Gastrocnemius medialis (tissue), 4 donors: ENCODE measurements at regions of chr4 and their contacts with region 1.

Region 1: DNA sequence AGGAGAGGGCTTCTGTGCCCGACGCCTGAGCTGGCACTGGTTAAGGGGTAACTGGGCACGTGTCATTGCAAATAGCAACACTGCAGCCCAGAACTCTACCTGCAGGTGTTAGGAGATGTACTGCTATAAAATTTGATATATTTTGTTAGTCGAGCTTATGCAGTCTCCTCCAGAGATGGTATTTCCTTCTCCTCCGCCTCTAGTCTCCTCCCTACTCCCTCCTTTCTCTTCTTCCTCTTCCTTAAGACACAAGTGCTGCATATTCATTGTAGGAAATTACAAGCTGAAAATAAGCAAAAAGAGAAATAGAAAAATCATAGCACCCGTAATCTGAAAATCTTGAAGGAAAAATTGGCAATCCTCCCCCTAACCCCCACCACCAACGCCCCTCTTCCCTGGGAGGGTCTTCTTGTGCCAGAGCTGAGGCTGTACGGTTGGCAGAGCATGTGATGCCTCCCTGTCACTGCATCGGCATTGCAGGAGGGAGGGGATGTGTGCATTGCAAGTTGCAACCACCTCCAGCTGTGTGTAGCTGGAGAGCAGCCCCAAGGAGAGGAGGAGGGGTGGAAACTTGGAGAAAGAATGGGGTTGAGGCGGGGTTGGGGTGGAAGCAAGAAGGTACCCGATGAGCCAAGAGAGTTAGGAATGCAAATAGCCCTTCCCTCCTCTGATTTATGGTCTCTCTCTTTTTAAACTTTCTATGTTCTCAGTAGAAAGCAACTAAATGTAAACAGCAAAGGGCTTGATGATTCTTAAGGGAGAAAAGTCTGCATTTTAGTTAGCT is 48.3 kb upstream of the MND1 start:
- DNase-seq: no peak
- ATAC-seq: no peak
- H3K4me3 ChIP-seq: no peak overlapping the region
- H3K27ac ChIP-seq: no peak overlapping the region
- H3K4me1 ChIP-seq: no peaks in the 10 kb centered on the region
- H3K27me3 ChIP-seq: no peaks in the 10 kb centered on the region
- CTCF ChIP-seq: no peak
- POLR2A ChIP-seq: no peak

Region 2: DNA sequence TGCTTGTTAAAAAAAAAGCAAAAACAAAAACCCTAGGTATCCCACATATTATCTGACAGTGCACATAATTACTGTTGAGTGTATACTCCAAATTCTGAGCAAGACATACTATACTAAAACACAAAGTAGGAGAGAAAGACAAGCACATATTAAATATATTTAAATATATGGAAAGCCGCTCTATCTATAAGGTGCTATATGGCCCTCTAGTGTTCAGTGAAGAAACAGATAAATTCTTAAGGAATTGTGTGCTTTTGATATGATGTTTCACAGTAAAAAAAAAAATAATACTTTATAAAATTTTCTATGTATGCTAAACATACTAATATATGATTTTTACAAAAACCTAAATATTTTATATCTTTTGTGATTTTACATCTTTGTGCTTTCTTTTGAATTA is 898.2 kb before region 1 on chr4:
- in situ Hi-C with region 1: no loop called
- intact Hi-C with region 1: no loop called
- DNase-seq: no peak
- ATAC-seq: no peak
- H3K4me3 ChIP-seq: no peak overlapping the region
- H3K27ac ChIP-seq: no peak overlapping the region
- H3K4me1 ChIP-seq: no peaks in the 10 kb centered on the region
- H3K27me3 ChIP-seq: no peaks in the 10 kb centered on the region
- CTCF ChIP-seq: peak in 2 of 5 experiments; percentile 23 to 49
- POLR2A ChIP-seq: no peak

Region 3: DNA sequence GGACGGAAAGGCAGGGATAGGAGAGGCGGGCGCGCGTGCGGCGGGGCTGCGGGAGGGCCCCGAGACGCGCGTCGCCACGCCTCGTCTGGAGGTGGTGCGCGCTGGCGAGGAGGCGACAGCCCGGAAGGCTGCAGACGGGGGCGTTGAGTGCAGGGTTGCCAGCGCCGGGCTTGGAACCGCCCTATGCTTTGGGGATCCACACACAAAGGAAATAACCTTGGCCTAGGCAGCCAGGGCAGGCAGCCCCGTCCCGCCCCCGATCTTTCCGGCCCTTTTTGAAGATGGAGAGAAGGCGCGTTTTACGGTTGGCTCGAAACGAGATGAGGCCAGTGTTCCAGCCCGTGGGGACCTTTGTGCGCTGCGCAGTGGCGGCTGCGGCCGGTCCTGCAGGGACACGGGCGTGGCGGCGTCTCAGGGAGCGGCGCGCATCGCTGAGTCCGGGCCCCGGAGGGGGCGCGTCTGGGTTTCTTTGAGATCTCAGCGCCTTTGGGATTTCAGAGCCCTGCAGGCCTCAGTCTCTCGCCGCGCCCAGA is 142.8 kb before region 1 on chr4:
- in situ Hi-C with region 1: loop called in 1 of 4 experiments (anchors 10 kb)
- intact Hi-C with region 1: no loop called
- DNase-seq: no peak
- ATAC-seq: no peak
- H3K4me3 ChIP-seq: peak overlapping the region; percentile 54 to 64 (median 58)
- H3K27ac ChIP-seq: no peak overlapping the region
- H3K4me1 ChIP-seq: peaks cover 9 to 16% of the 10 kb centered on the region in 2 donors
- H3K27me3 ChIP-seq: no peaks in the 10 kb centered on the region
- CTCF ChIP-seq: no peak
- POLR2A ChIP-seq: no peak